Heart left ventricle (tissue), 16 donors: ENCODE measurements at regions of chr9 and their contacts with region 1.

Region 1: GRCh38 chr9:100411472-100412283 is 15.3 kb upstream of the MSANTD3 start:
- DNase-seq: peak; percentile 88 to 95 (median 93)
- ATAC-seq: peak; percentile 97 to 100 (median 100)
- H3K4me3 ChIP-seq: peak overlapping the region; percentile 8 to 68 (median 56)
- H3K27ac ChIP-seq: peak overlapping the region in 1 of 12 donors; percentile 23
- H3K4me1 ChIP-seq: peaks cover 0 to 12% (median 3%) of the 10 kb centered on the region in 12 donors
- H3K27me3 ChIP-seq: peaks cover 0 to 8% (median 0%) of the 10 kb centered on the region in 9 donors
- CTCF ChIP-seq: no peak
- POLR2A ChIP-seq: peak in 1 of 2 donors; percentile 66

Region 2: DNA sequence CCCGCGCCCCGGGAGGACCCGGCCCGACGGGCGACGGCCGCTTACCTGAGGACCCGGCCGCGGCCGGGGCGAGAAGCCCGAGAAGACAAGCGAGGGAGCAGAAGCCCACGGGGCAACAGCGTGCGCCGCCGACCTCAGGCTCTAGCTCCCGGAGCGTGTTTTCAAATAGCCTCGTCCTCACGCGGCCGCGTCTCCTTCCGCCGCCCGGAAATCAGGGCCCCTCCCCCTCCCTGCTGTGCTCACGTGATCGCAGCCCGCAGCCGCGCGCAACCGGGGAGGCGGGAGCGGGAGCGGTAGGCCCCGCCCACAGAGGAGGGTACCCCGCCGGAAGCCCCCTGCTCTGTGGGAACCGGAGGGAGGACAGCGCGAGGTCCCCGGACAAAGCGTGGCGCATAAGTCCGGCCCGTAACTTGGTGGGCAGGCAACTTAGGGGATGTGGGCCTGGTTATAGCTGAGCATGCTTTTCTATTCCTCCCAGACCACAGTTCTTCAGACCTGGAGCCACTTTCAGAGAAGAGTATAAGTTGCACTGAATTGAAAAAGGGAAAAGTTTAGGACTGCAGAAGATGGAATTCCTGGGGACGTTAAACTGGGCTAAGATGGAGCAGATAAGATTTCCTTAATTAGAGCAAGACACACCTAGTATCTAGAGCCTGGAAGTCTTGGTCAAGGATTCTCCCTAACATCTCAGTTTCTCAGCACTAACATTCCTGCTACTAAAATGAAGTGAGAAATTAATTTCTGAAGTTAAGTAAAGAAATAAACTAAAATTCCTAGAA is 58.8 kb before region 1 on chr9 and contains the start of gene TEX10:
- intact Hi-C with region 1: loop called in 3 of 10 experiments (anchors 2 to 10 kb)
- DNase-seq: peak; percentile 89 to 94 (median 90)
- ATAC-seq: peak; percentile 93 to 98 (median 98)
- H3K4me3 ChIP-seq: peak within 1 kb of the TSS; percentile 80 to 99 (median 96)
- H3K27ac ChIP-seq: peak within 1 kb of the TSS; percentile 46 to 90 (median 82)
- H3K4me1 ChIP-seq: peaks cover 0 to 28% (median 12%) of the 10 kb centered on the region in 12 donors
- H3K27me3 ChIP-seq: no peaks in the 10 kb centered on the region
- CTCF ChIP-seq: no peak
- POLR2A ChIP-seq: peak in 1 of 2 donors; percentile 66
- total RNA-seq, gene TEX10: 6.4 to 10.6 (median 9.2) TPM

Region 3: DNA sequence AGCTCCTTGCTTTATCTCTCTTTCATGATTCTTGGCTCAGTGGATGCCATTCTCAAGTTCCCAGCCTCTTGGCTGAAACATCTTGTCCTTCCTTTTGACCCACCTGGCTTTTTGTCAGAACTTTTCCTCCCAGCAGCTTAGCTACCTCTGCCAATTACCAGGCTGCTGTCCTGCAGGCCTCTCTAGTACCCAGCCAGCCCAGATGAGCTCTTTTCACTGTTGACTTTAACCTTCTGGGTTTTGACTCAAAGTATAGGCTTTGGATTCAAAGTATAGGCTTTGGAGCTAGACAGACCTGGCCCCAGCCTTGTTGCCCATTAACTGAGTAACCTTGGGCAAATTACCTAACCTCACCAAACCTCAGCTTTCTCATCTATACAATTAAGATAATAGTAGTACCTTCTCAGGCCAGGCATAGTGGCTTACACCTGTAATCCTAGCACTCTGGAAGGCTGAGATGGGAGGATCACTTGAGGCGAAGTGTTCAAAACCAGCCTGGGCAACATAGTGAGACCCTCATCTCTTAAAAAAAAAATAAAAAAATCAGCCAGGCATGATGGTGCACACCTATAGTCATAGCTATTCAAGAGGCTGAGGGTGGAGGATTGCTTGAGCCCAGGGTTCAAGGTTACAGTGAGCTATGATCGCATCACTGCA is 54.6 kb after region 1 on chr9:
- intact Hi-C with region 1: loop called in 1 of 10 experiments (anchors 10 kb)
- DNase-seq: peak in 3 of 5 donors; percentile 20 to 48 (median 29)
- ATAC-seq: peak; percentile 71 to 92 (median 84)
- H3K4me3 ChIP-seq: no peak overlapping the region
- H3K27ac ChIP-seq: peak overlapping the region in 4 of 12 donors; percentile 29 to 57 (median 41)
- H3K4me1 ChIP-seq: peaks cover 0 to 10% (median 0%) of the 10 kb centered on the region in 12 donors
- H3K27me3 ChIP-seq: peaks cover 0 to under 1% (median 0%) of the 10 kb centered on the region in 9 donors
- CTCF ChIP-seq: no peak
- POLR2A ChIP-seq: no peak

Region 4: GRCh38 chr9:100554935-100555401 is 143.3 kb after region 1 on chr9:
- intact Hi-C with region 1: no loop called
- DNase-seq: no peak
- ATAC-seq: no peak
- H3K4me3 ChIP-seq: no peak overlapping the region
- H3K27ac ChIP-seq: no peak overlapping the region
- H3K4me1 ChIP-seq: no peaks in the 10 kb centered on the region
- H3K27me3 ChIP-seq: no peaks in the 10 kb centered on the region
- CTCF ChIP-seq: no peak
- POLR2A ChIP-seq: no peak